B cell (primary cell): ENCODE measurements at regions of chr14 and their contacts with region 1.

Region 1: DNA sequence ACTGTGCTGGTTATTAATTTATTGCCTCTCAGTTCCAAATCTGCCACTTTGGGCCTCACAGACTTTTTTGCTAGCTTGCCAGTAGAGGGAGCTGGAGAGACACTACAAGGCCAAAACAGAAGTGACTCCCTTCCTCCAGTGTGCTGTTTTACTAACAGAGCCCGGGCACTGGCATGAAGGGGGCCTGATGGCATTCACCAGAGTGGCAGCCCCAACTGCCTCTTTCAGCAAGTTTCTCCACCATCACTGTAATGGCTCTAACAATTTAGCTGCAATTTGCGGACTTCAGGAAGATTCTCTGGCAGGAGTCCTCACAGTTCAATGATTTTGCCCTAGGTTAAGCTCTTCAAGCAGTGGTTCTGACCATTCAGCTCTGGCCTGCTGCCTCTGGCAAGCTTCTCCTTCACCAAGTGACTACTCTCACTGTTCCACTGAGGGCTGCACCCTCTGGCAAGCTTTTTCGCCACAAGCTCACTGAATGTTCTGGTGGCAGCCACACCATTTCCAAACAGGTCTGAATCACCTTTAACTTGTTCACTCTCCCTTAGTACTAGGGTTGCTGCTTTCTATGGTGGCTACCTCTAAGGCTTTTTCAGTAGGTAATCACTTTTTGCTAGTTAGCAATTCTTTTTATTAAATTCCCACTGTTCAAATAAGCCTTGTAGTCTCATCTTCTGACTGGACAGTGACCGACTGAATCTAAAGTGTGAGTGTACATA is 104.9 kb downstream of the ZC3H14 start:
- DNase-seq: peak; percentile 82
- ATAC-seq: peak; percentile 87
- H3K4me3 ChIP-seq: peak overlapping the region in 2 of 5 experiments; percentile 3 to 31
- H3K4me3 Mint-ChIP-seq: peak overlapping the region; percentile 66
- H3K27ac ChIP-seq: peak overlapping the region; percentile 28 to 58
- H3K27ac Mint-ChIP-seq: peak overlapping the region; percentile 59
- H3K4me1 ChIP-seq: peaks cover 22 to 24% of the 10 kb centered on the region in 2 donors
- H3K4me1 Mint-ChIP-seq: peaks cover 20% of the 10 kb centered on the region
- H3K27me3 ChIP-seq: no peaks in the 10 kb centered on the region
- H3K27me3 Mint-ChIP-seq: no peaks in the 10 kb centered on the region
- CTCF ChIP-seq: peak; percentile 92

Region 2: DNA sequence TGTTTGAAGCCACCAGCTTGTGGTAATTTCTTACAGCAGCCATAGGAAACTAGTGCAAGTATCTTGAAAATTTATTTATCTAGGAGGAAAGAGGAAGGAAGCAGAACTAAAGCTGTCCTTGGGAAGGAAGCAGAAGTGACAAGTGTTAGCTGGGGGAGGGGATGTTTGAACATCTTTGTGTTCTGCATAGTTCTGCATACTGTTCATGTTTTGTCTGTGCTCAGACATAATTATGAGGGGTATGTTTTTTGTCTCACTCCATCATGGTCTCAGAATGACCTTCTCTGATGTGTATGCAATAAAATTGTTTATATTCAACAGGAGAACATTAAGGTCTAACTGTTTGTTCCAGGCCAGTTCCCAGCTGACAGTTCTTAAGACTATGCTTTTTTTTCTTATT is 1281.2 kb before region 1 on chr14:
- CTCF ChIA-PET with region 1: no interaction called
- POLR2A ChIA-PET with region 1: no interaction called
- intact Hi-C with region 1: no loop called
- DNase-seq: no peak
- ATAC-seq: no peak
- H3K4me3 ChIP-seq: no peak overlapping the region
- H3K4me3 Mint-ChIP-seq: no peak overlapping the region
- H3K27ac ChIP-seq: no peak overlapping the region
- H3K27ac Mint-ChIP-seq: no peak overlapping the region
- H3K4me1 ChIP-seq: no peaks in the 10 kb centered on the region
- H3K4me1 Mint-ChIP-seq: no peaks in the 10 kb centered on the region
- H3K27me3 ChIP-seq: no peaks in the 10 kb centered on the region
- H3K27me3 Mint-ChIP-seq: no peaks in the 10 kb centered on the region
- CTCF ChIP-seq: no peak

Region 3: GRCh38 chr14:88792572-88793258 is 125.0 kb after region 1 on chr14 and contains the start of gene EML5:
- CTCF ChIA-PET with region 1: interaction called, 7 read pairs
- POLR2A ChIA-PET with region 1: no interaction called
- intact Hi-C with region 1: loop called (anchors 1 kb)
- DNase-seq: peak; percentile 93
- ATAC-seq: peak; percentile 84
- H3K4me3 ChIP-seq: peak within 1 kb of the TSS; percentile 68 to 77 (median 74)
- H3K4me3 Mint-ChIP-seq: peak within 1 kb of the TSS; percentile 92
- H3K27ac ChIP-seq: peak within 1 kb of the TSS; percentile 68 to 83
- H3K27ac Mint-ChIP-seq: peak within 1 kb of the TSS; percentile 89
- H3K4me1 ChIP-seq: peaks cover 8 to 14% of the 10 kb centered on the region in 2 donors
- H3K4me1 Mint-ChIP-seq: peaks cover 19% of the 10 kb centered on the region
- H3K27me3 ChIP-seq: peaks cover 0 to 4% (median 2%) of the 10 kb centered on the region in 4 experiments
- H3K27me3 Mint-ChIP-seq: no peaks in the 10 kb centered on the region
- CTCF ChIP-seq: peak; percentile 17
- total RNA-seq, gene EML5: 6.5 and 6.9 TPM in 2 replicates

Region 4: GRCh38 chr14:88929656-88930425 is 262.1 kb after region 1 on chr14:
- CTCF ChIA-PET with region 1: interaction called, 3 read pairs
- POLR2A ChIA-PET with region 1: no interaction called
- intact Hi-C with region 1: loop called (anchors 2 kb)
- DNase-seq: no peak
- ATAC-seq: no peak
- H3K4me3 ChIP-seq: no peak overlapping the region
- H3K4me3 Mint-ChIP-seq: no peak overlapping the region
- H3K27ac ChIP-seq: no peak overlapping the region
- H3K27ac Mint-ChIP-seq: no peak overlapping the region
- H3K4me1 ChIP-seq: no peaks in the 10 kb centered on the region
- H3K4me1 Mint-ChIP-seq: no peaks in the 10 kb centered on the region
- H3K27me3 ChIP-seq: no peaks in the 10 kb centered on the region
- H3K27me3 Mint-ChIP-seq: peaks cover 31% of the 10 kb centered on the region
- CTCF ChIP-seq: no peak

Region 5: DNA sequence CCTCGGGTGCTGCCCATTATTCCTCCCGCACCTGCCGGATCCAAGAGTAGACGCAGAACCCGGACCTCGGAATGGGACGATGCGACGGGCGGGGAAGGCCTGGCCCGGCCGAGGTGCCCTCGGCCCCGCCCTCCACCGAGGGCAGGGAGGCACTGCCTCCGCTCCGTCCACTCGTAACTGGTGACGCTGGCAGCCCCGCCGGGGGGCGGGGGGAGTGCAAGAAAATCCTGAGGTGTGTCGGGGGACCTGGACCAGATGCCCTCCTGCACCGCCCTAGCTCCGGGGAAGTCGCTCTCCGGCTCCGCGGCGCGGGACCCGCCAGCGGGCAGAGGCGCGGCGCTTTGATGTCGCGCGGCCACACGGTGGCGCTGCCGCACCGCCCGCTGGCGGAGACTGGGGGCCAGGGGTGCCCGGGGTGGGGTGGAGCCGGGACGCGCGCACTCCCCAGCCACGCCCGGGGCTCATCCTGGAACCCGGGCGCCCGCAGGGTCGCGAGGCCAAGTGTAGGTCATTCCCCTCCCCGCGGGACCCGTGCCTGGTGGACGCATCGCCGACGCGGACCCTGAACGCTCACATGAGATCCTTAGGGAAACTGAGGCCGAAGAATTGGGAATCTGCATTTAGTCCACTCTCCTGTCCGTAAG is 359.5 kb after region 1 on chr14:
- CTCF ChIA-PET with region 1: interaction called, 13 read pairs
- POLR2A ChIA-PET with region 1: no interaction called
- intact Hi-C with region 1: no loop called
- DNase-seq: peak; percentile 79
- ATAC-seq: peak; percentile 91
- H3K4me3 ChIP-seq: peak overlapping the region; percentile 8 to 74 (median 53)
- H3K4me3 Mint-ChIP-seq: peak overlapping the region; percentile 76
- H3K27ac ChIP-seq: no peak overlapping the region
- H3K27ac Mint-ChIP-seq: no peak overlapping the region
- H3K4me1 ChIP-seq: peaks cover 13% of the 10 kb centered on the region in 2 donors
- H3K4me1 Mint-ChIP-seq: peaks cover 4% of the 10 kb centered on the region
- H3K27me3 ChIP-seq: peaks cover 0 to 52% (median 28%) of the 10 kb centered on the region in 4 experiments
- H3K27me3 Mint-ChIP-seq: peaks cover 66% of the 10 kb centered on the region
- CTCF ChIP-seq: peak; percentile 93

Region 6: GRCh38 chr14:89915114-89915878 is 1247.6 kb after region 1 on chr14:
- CTCF ChIA-PET with region 1: interaction called, 3 read pairs
- POLR2A ChIA-PET with region 1: no interaction called
- intact Hi-C with region 1: loop called (anchors 5 kb)
- DNase-seq: peak; percentile 72
- ATAC-seq: peak; percentile 54
- H3K4me3 ChIP-seq: no peak overlapping the region
- H3K4me3 Mint-ChIP-seq: no peak overlapping the region
- H3K27ac ChIP-seq: no peak overlapping the region
- H3K27ac Mint-ChIP-seq: no peak overlapping the region
- H3K4me1 ChIP-seq: no peaks in the 10 kb centered on the region
- H3K4me1 Mint-ChIP-seq: peaks cover 3% of the 10 kb centered on the region
- H3K27me3 ChIP-seq: no peaks in the 10 kb centered on the region
- H3K27me3 Mint-ChIP-seq: peaks cover 3% of the 10 kb centered on the region
- CTCF ChIP-seq: peak; percentile 98